Transverse colon (tissue), 4 donors: ENCODE measurements at regions of chr20 and their contacts with region 1.

Region 1: DNA sequence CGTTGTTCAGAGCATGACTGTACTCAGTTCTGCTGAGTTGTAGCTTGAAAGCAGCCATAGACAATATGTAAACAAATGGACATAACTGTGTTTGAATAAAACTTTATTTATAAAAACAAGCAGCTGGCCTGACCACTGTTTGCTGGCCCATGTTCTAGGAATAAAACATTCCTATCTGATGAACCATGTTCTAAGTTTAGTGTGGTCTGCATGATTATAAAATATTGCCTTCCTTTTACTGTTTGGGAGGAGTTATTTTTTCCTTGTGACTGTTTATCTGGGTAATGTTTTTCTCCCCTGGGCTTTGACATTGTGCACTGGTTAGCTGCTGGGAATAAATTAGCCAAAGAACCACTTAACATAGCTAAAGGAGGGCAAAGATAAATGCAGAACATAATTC is 55.1 kb downstream of the CDS2 start:
- DNase-seq: no peak
- H3K4me3 ChIP-seq: no peak overlapping the region
- H3K27ac ChIP-seq: peak overlapping the region; percentile 23 to 38 (median 36)
- H3K4me1 ChIP-seq: peaks cover 0 to 11% (median 2%) of the 10 kb centered on the region in 4 donors
- H3K27me3 ChIP-seq: no peaks in the 10 kb centered on the region
- CTCF ChIP-seq: no peak
- EP300 ChIP-seq: no peak
- POLR2A ChIP-seq: no peak

Region 2: DNA sequence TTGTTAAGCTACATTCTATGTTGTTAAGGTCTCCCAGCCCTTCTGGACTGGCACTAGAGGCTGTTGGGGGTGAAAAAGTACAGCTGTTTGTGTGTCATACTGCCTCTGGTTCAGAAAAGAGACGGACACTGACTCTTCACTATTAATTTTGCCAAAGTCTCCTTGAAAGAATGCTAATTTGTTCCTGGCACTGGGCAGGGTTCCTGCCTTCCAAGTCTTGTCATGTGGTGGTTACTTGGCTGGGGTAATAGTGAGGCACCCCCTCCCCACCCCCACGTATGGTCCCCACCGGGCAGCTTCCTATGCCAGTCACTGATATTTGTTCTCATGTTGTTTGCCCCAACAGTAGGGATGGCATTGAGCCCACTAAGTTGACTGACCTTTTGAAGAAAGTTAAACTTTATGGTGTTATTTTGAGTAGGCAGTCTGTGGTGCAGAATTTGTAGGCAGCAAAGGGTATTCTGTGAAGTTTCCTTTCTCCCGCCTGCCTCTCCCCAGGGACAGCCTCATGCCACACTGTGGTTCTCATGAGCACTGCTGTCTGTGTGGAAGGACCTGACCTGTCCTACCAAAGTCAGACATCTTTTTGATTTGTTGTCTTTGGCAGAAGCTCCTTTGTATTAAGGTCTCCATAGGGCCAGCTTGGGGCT is 46.5 kb before region 1 on chr20:
- in situ Hi-C with region 1: loop called in 2 of 4 experiments (anchors 10 kb)
- intact Hi-C with region 1: no loop called
- DNase-seq: no peak
- H3K4me3 ChIP-seq: no peak overlapping the region
- H3K27ac ChIP-seq: peak overlapping the region in 2 of 4 donors; percentile 9 to 24
- H3K4me1 ChIP-seq: peaks cover 15 to 45% (median 30%) of the 10 kb centered on the region in 4 donors
- H3K27me3 ChIP-seq: no peaks in the 10 kb centered on the region
- CTCF ChIP-seq: no peak
- EP300 ChIP-seq: no peak
- POLR2A ChIP-seq: no peak